ENCODE measurements at regions of chr15 and their contacts with region 1.

Region 1: DNA sequence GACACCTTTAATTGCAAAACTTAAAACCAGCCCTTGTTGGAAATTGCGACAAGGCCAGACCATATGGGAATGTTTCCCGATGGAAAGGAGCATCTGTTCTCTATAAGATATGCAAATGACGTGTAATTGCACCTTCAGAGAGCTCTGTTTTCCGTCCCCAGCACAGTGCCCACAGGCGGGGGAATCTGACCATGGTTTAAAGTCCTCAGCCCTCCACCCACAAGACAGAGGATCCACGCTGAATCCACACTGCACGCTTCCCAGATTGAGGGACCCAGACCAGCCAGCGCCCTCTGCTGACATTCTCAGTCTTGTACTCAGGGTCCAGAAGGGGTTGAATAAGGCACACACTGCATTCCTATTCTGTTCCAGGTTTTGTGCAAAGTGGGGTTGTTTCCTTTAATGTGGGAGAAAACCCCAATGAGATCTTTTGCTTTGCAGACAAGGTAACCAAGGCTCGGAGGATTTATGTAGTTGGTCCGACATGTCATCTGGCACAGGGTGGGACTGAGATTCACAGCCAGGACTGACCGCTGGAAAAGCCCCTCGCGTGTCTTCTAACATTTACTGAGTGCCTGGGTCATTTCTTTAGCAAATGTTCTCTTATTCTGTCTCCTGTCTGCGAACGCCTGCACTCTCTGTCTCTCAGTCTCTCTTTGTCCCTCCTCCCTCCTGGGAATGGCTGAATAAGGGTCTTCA is 36.8 kb upstream of the KLHL25 start:
- DNase-seq: no peak
- H3K4me3 ChIP-seq: no peak overlapping the region
- H3K27ac ChIP-seq: no peak overlapping the region
- H3K27me3 ChIP-seq: peaks cover 6% of the 10 kb centered on the region
- CTCF ChIP-seq: peak; percentile 83

Region 2: GRCh38 chr15:85785887-85786780 is 45.4 kb before region 1 on chr15:
- CTCF ChIA-PET with region 1: interaction called, 12 read pairs
- POLR2A ChIA-PET with region 1: no interaction called
- DNase-seq: no peak
- H3K4me3 ChIP-seq: no peak overlapping the region
- H3K27ac ChIP-seq: peak overlapping the region; percentile 39
- H3K27me3 ChIP-seq: no peaks in the 10 kb centered on the region
- CTCF ChIP-seq: no peak

Region 3: GRCh38 chr15:85865070-85865684 is 33.6 kb after region 1 on chr15:
- CTCF ChIA-PET with region 1: no interaction called
- POLR2A ChIA-PET with region 1: no interaction called
- DNase-seq: no peak
- H3K4me3 ChIP-seq: no peak overlapping the region
- H3K27ac ChIP-seq: no peak overlapping the region
- H3K27me3 ChIP-seq: peaks cover 5% of the 10 kb centered on the region
- CTCF ChIP-seq: peak; percentile 70

Region 4: GRCh38 chr15:85988741-85989140 is 157.2 kb after region 1 on chr15:
- CTCF ChIA-PET with region 1: no interaction called
- POLR2A ChIA-PET with region 1: no interaction called
- DNase-seq: no peak
- H3K4me3 ChIP-seq: no peak overlapping the region
- H3K27ac ChIP-seq: no peak overlapping the region
- H3K27me3 ChIP-seq: no peaks in the 10 kb centered on the region
- CTCF ChIP-seq: no peak

Measured in AG04450 (cell line).